Heart left ventricle (tissue), 16 donors: ENCODE measurements at regions of chr22 and their contacts with region 1.

Region 1: GRCh38 chr22:20156611-20157429 is 6.0 kb upstream of the CCDC188 start:
- DNase-seq: peak; percentile 75 to 91 (median 79)
- ATAC-seq: peak; percentile 30 to 77 (median 72)
- H3K4me3 ChIP-seq: no peak overlapping the region
- H3K27ac ChIP-seq: no peak overlapping the region
- H3K4me1 ChIP-seq: peaks cover 0 to 11% (median 0%) of the 10 kb centered on the region in 12 donors
- H3K27me3 ChIP-seq: peaks cover 0 to 10% (median 0%) of the 10 kb centered on the region in 9 donors
- CTCF ChIP-seq: peak; percentile 96 to 100 (median 99)
- POLR2A ChIP-seq: no peak

Region 2: DNA sequence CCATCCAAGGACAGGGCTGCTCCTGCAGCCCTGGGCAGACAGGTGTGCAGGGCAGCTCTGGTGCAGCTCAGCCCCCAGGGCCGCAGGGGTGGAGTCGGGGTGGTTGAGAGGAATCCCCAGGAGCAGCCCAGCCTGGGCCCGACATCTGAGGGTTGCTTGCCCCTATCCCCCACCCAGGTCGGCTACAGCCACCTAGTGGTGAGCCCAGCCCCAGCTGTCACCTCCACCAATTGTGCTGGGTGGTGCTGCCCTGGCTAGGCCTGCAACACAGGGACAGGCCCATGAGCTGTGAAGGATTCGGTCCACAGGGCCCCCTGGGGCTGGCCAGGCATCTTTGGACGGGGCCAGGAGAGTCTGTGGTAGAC is 81.7 kb after region 1 on chr22:
- intact Hi-C with region 1: loop called in 1 of 10 experiments (anchors 1 kb)
- DNase-seq: peak; percentile 45 to 80 (median 55)
- ATAC-seq: peak; percentile 49 to 75 (median 54)
- H3K4me3 ChIP-seq: peak overlapping the region in 3 of 12 donors; percentile 7 to 22 (median 18)
- H3K27ac ChIP-seq: peak overlapping the region; percentile 52 to 94 (median 83)
- H3K4me1 ChIP-seq: peaks cover 8 to 50% (median 43%) of the 10 kb centered on the region in 12 donors
- H3K27me3 ChIP-seq: no peaks in the 10 kb centered on the region
- CTCF ChIP-seq: peak; percentile 23 to 70 (median 56)
- POLR2A ChIP-seq: no peak

Region 3: GRCh38 chr22:20279662-20280134 is 122.9 kb after region 1 on chr22:
- intact Hi-C with region 1: loop called in 4 of 10 experiments (anchors 1 to 5 kb)
- DNase-seq: no peak
- ATAC-seq: no peak
- H3K4me3 ChIP-seq: no peak overlapping the region
- H3K27ac ChIP-seq: no peak overlapping the region
- H3K4me1 ChIP-seq: no peaks in the 10 kb centered on the region
- H3K27me3 ChIP-seq: no peaks in the 10 kb centered on the region
- CTCF ChIP-seq: no peak
- POLR2A ChIP-seq: no peak